Heart right ventricle (tissue), 16 donors: ENCODE measurements at regions of chr18 and their contacts with region 1.

Region 1: GRCh38 chr18:56382541-56382940 is 255.9 kb downstream of the TXNL1 start:
- DNase-seq: peak in 1 of 2 donors; percentile 40
- ATAC-seq: peak in 6 of 8 donors; percentile 55 to 83 (median 60)
- H3K4me3 ChIP-seq: no peak overlapping the region
- H3K27ac ChIP-seq: no peak overlapping the region
- H3K4me1 ChIP-seq: peaks cover 0 to 10% (median 4%) of the 10 kb centered on the region in 9 donors
- H3K27me3 ChIP-seq: no peaks in the 10 kb centered on the region
- CTCF ChIP-seq: peak in 1 of 9 donors; percentile 11

Region 2: GRCh38 chr18:56431551-56431950 is 49.0 kb after region 1 on chr18:
- intact Hi-C with region 1: loop called in 1 of 10 experiments (anchors 10 kb)
- DNase-seq: no peak
- ATAC-seq: no peak
- H3K4me3 ChIP-seq: no peak overlapping the region
- H3K27ac ChIP-seq: no peak overlapping the region
- H3K4me1 ChIP-seq: no peaks in the 10 kb centered on the region
- H3K27me3 ChIP-seq: no peaks in the 10 kb centered on the region
- CTCF ChIP-seq: no peak

Region 3: DNA sequence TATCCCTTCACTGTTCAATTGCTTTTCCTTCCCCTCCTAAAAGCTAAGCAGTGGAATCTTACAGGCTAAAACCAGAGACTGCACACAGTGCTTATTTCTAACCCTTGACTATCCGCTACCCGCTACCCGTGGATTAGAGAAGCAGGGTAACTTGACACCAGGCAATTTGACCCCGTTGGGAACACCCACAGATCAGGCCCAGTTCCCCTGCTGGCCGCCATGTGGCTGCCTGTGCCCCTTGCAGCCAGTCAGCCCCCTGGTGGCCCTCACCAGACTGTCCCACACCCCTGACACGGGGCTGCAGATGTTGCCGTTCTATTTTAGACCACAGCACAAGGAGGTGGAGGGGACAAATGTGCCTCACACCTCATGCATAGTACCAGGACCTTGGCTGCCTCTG is 181.0 kb after region 1 on chr18:
- intact Hi-C with region 1: loop called in 1 of 10 experiments (anchors 10 kb)
- DNase-seq: no peak
- ATAC-seq: peak in 1 of 8 donors; percentile 31
- H3K4me3 ChIP-seq: no peak overlapping the region
- H3K27ac ChIP-seq: no peak overlapping the region
- H3K4me1 ChIP-seq: peaks cover 0 to 18% (median 0%) of the 10 kb centered on the region in 9 donors
- H3K27me3 ChIP-seq: no peaks in the 10 kb centered on the region
- CTCF ChIP-seq: peak in 2 of 9 donors; percentile 17 to 19